ENCODE measurements at regions of chr2 and their contacts with region 1.

Region 1: DNA sequence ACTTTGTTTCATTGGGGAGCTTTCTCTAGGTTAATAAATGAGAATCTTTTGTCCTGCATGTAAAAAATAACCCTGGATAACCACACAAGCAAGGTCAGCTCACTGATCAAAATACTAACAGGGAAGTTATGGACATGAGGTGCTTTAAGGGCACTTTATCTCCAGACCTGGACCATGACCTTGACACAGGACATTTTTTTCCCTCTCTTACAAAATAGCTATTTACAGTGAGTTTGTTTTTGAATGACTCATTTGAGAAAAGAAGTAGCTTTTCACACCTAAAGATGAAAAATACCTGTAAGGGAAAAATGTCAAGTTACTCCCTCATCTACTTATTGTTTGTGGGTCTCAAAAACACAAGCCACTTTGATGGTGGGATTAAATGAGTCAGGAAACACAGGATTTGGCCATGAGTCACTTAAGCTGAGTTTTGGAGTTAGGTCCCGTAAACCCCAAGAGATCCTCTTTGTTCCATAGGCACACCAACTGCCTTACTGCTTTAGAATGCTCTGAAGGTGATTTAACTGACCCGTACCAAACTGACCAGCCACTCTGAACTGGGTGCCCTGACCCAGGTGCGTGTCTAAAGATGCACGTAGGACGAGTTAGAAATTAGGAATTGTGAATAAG is 479.3 kb upstream of the NXPH2 start:
- DNase-seq: no peak
- ATAC-seq: no peak
- H3K4me3 Mint-ChIP-seq: no peak overlapping the region
- H3K27ac Mint-ChIP-seq: no peak overlapping the region
- H3K4me1 Mint-ChIP-seq: peaks cover 3% of the 10 kb centered on the region; the same call in 1 of the 2 replicates
- H3K27me3 Mint-ChIP-seq: no peaks in the 10 kb centered on the region
- CTCF ChIP-seq: no peak

Region 2: DNA sequence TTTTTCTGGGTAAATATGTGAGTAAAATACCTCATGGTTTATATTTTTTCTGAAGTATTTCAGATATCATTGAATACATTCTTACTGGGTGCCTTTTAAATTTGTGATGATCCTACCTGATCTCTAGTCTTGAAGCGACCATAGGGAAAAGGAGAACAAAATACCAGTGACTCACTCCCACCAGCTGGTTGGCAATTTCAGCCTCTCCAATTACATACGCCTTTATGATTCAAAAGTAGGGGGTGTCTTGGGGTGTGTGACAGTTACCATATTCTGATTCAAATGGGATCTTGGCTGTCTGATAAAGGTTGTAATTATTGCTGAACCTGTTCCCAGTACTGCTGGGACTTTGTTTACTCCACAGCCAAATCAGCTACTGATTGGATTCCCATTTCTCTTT is 303.4 kb before region 1 on chr2:
- CTCF ChIA-PET with region 1: no interaction called
- POLR2A ChIA-PET with region 1: interaction called, 12 read pairs
- DNase-seq: no peak
- ATAC-seq: peak; percentile 82
- H3K4me3 Mint-ChIP-seq: no peak overlapping the region
- H3K27ac Mint-ChIP-seq: peak overlapping the region; percentile 64
- H3K4me1 Mint-ChIP-seq: peaks cover 38% of the 10 kb centered on the region
- H3K27me3 Mint-ChIP-seq: no peaks in the 10 kb centered on the region
- CTCF ChIP-seq: no peak